Calu3 (cell line): ENCODE measurements at regions of chr10 and their contacts with region 1.

Region 1: GRCh38 chr10:102322914-102323313 is 72.6 kb upstream of the NFKB2 start:
- DNase-seq: no peak
- H3K4me3 Mint-ChIP-seq: no peak overlapping the region
- H3K27ac Mint-ChIP-seq: no peak overlapping the region
- H3K4me1 Mint-ChIP-seq: peaks cover 7% of the 10 kb centered on the region
- H3K27me3 Mint-ChIP-seq: no peaks in the 10 kb centered on the region
- CTCF ChIP-seq: no peak

Region 2: DNA sequence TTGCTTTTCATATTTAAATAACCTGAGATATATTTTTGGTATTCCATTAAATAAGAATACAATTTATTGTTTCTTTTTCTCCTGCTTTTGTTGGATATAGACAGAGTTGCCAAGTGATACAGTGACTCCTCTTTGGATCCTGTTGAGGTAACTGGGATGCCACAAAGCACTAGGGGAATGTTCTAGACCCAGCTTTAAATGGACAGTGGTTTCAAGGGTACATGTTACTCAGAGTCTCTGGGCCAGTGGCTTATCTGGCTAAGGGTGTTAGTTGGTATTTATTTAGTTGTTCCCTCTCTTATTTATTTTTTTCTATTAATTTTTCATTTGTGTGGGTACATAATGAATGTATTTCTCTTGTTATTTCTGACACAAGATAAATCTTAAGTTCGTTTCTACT is 68.5 kb before region 1 on chr10:
- CTCF ChIA-PET with region 1: no interaction called
- intact Hi-C with region 1: loop called (anchors 10 kb)
- DNase-seq: no peak
- H3K4me3 Mint-ChIP-seq: no peak overlapping the region
- H3K27ac Mint-ChIP-seq: no peak overlapping the region
- H3K4me1 Mint-ChIP-seq: no peaks in the 10 kb centered on the region
- H3K27me3 Mint-ChIP-seq: no peaks in the 10 kb centered on the region
- CTCF ChIP-seq: no peak

Region 3: GRCh38 chr10:102420810-102421644 is 98.1 kb after region 1 on chr10 and contains the start of gene FBXL15:
- CTCF ChIA-PET with region 1: no interaction called
- intact Hi-C with region 1: no loop called
- DNase-seq: peak; percentile 88
- H3K4me3 Mint-ChIP-seq: peak within 1 kb of the TSS; percentile 92
- H3K27ac Mint-ChIP-seq: peak within 1 kb of the TSS; percentile 80
- H3K4me1 Mint-ChIP-seq: peaks cover 3% of the 10 kb centered on the region
- H3K27me3 Mint-ChIP-seq: peaks cover 29% of the 10 kb centered on the region
- CTCF ChIP-seq: no peak
- total RNA-seq, gene FBXL15: 5.5 and 6.4 TPM in 2 replicates